ENCODE measurements at regions of chr11 and their contacts with region 1.

Region 1: GRCh38 chr11:12529793-12530192 is 144.4 kb upstream of the TEAD1 start:
- DNase-seq: no peak
- H3K4me3 ChIP-seq: no peak overlapping the region
- H3K27ac ChIP-seq: no peak overlapping the region
- H3K4me1 ChIP-seq: no peaks in the 10 kb centered on the region
- H3K27me3 ChIP-seq: no peaks in the 10 kb centered on the region
- CTCF ChIP-seq: no peak
- POLR2A ChIP-seq: no peak

Region 2: GRCh38 chr11:12543596-12544415 is 14.0 kb after region 1 on chr11:
- intact Hi-C with region 1: loop called (anchors 1 kb)
- DNase-seq: no peak
- H3K4me3 ChIP-seq: no peak overlapping the region
- H3K27ac ChIP-seq: no peak overlapping the region
- H3K4me1 ChIP-seq: no peaks in the 10 kb centered on the region
- H3K27me3 ChIP-seq: no peaks in the 10 kb centered on the region
- CTCF ChIP-seq: no peak
- POLR2A ChIP-seq: no peak